ENCODE measurements at regions of chr6 and their contacts with region 1.

Region 1: DNA sequence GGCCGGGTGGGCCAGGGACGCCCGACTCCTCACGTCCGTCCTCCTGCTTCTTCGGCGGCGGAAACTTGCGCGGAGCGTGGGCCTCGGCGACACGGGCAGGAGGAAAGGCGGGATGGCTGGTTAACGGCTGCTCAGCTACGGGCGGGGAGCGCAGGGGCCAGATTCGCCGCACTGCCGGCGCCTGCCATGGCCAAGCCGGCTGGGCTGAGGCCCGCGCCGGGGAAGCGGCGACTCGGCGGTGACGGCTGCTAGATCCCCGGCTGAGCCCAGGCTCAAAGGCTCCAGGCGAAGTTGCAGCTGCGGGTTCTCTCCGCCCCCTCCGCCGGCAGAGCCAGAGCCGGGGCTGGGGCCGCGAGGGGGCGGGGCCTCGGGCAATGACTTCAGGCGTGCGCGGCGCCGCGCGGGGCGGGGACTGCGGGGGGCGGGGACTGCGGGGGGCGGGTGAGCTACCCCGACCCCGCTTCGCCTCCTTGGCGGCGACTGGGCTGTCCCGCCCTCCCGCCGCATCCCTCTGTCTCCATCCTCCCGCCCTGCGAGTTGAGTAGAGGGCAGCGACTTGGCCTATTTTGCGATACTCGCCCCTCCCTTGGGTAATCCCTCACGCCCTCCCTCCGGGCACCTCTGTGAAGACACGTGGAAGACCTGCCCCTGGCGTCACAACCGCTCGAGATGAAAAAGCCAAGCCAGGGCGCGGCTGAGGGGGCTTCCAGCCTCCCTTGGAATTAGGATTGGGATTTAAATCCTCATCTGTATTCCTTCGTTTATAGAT is at the start of gene CEP85L:
- DNase-seq: peak; percentile 75 to 98 (median 95)

Region 2: DNA sequence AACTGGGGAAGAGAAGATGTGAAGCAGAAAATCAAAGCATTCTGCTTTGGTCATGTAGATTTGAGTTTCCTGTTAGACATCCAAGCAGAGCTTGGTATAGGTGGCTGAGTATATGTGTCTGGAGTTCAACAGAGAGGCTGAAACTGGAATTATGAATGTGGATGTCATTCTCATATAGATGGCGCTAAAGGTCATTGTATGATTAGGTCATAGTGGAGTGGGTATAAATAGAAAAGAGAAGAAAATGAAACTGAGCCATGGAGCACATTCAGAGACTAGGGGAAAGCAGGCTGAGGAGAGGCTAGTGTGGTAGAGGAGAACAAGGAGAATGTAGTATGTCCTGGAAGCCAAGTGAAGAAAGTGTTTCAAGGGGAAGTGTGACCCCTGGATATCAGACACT is 399.0 kb before region 1 on chr6:
- intact Hi-C with region 1: no loop called
- DNase-seq: no peak

Region 3: GRCh38 chr6:118709859-118710350 is 58.4 kb after region 1 on chr6:
- intact Hi-C with region 1: loop called (anchors 5 kb)
- DNase-seq: peak in 4 of 42 donors; percentile 3 to 40 (median 19)

Region 4: GRCh38 chr6:118787724-118788423 is 136.4 kb after region 1 on chr6:
- intact Hi-C with region 1: loop called (anchors 10 kb)
- DNase-seq: peak in 1 of 42 donors; percentile 39

Region 5: GRCh38 chr6:118800394-118801071 is 149.1 kb after region 1 on chr6:
- intact Hi-C with region 1: no loop called
- DNase-seq: peak; percentile 53 to 97 (median 90)

Region 6: DNA sequence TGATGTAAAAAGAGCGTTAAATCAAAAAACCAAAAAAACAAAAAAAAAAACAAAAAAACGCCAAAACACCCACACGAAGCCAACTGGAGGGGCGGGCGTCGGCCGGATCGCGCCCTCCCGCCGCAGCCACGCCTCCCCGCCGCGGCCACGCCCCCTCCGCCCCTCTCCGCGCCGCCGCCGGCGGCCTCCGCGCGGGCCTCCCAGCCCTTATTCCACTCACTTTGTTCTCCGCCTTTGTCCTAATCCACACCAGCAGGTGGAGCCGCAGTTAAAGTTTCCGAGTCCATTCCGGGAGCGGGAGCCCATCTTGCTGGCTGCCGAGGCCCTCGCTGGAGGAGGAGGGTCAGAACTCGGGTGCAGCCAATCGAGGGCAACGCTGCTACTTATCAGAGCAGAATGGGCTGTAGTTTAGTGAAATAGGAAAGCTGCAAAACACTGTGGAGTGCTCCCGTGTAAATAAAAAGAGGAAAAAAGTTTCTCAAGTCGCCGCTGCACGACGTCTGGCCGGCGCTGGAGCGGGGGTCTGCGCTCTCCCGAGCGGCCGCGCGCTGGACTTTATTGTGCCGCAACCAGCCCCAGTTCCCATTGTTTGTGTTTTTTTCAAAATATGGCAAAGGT is 242.4 kb after region 1 on chr6 and contains the start of gene ASF1A:
- intact Hi-C with region 1: loop called (anchors 5 kb)
- DNase-seq: peak; percentile 90 to 99 (median 98)